Right ventricle myocardium superior (tissue), 1 donor: ENCODE measurements at regions of chr2 and their contacts with region 1.

Region 1: GRCh38 chr2:16608661-16609643 is 56.7 kb downstream of the CYRIA start:
- DNase-seq: peak; percentile 90
- ATAC-seq: peak; percentile 93

Region 2: DNA sequence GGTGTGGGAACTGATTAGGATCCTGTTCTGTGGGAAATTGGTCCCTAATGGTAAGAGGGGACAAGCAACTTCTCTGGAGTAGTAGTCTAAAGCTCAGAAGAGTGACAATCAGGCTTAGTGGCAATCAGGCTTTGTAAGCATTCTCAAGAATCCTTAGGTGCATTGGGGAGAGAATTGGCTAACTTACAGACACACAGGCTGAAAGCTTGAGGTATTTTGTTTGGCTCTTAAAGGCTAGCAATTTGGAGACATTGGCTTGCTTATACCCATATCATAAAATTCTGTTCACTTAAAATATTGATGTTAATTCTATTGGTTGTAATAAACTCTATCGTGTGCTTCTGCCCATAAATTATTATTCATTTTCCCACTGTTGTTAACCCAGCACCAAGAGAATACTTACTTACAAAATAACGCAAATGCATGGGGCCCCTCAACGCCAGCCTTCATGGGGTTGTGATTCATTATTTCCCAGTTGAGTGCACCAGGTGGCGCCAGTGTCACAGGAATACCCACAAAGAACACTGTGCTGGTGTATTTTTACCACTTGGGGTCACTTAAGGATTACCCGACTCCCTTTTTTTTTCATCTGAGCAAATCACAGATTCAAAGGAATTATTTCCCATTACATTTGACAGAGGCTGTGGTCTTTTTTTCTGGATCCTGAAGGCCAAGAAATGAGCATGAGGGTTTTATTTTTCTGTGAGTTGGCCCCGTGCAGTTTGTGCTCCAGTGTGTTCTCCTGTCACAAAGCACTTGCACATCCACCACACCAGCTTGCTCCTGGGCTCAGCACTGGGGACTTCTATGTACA is 971.8 kb before region 1 on chr2:
- intact Hi-C with region 1: loop called (anchors 5 kb)
- DNase-seq: peak; percentile 72
- ATAC-seq: peak; percentile 92

Region 3: DNA sequence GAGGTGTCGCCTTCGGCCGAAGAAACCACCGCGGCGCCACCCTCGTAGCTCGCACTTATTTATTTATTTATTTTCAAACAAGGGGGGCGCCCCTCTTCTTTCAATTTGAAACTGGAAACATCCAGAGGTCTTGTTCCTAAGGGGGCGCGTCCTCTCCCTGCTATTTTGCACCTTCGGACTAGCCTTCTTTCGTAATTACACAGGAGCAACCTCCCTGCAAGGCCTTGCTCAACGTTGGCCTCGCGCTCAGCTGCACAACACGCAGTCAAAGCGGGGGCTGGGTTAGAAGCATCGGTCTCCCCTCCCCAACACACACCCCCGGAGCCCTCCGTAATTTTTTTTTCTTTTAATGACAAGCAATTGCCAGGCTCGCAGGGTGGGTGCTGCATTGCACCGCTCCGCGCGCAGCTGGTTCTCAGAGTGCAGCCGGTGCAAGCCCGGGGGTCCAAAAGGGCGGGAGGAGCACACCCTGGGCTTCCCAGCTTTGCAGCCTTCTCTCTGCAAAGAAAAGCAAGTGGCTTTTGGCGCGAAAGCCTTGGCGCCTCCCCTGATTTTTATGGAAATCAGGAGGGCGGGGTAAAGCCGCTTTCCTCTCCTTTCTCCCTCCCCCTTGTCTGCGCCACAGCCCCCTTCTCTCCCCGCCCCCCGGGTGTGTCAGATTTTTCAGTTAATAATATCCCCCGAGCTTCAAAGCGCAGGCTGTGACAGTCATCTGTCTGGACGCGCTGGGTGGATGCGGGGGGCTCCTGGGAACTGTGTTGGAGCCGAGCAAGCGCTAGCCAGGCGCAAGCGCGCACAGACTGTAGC is 668.9 kb before region 1 on chr2 and contains the start of gene MYCN:
- intact Hi-C with region 1: loop called (anchors 10 kb)
- DNase-seq: peak; percentile 53
- ATAC-seq: peak; percentile 46
- total RNA-seq, gene MYCN: 0.24 TPM

Region 4: DNA sequence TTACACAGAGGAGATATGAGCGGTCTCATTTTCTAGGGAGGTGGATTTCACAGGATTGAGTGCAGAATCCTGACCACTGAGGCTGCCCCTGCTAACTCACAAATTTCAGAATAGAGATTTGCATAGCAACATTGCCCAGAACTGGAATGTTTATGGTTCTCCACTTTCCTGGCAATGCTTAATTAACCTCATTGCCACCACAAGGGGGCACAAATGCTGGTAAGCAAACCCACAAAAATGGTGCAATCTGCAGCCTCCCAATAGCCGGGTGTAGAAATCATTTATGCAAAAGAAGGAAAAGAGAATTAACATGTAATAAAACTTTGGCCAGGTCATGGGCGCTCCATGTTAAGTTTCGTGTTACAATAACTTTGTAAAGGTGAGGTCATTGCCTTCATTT is 55.7 kb before region 1 on chr2:
- intact Hi-C with region 1: loop called (anchors 2 kb)
- DNase-seq: no peak
- ATAC-seq: peak; percentile 63

Region 5: GRCh38 chr2:16756831-16757644 is 148.1 kb after region 1 on chr2:
- intact Hi-C with region 1: loop called (anchors 2 kb)
- DNase-seq: peak; percentile 87
- ATAC-seq: peak; percentile 93